IMR-90 (cell line): ENCODE measurements at regions of chrX and their contacts with region 1.

Region 1: DNA sequence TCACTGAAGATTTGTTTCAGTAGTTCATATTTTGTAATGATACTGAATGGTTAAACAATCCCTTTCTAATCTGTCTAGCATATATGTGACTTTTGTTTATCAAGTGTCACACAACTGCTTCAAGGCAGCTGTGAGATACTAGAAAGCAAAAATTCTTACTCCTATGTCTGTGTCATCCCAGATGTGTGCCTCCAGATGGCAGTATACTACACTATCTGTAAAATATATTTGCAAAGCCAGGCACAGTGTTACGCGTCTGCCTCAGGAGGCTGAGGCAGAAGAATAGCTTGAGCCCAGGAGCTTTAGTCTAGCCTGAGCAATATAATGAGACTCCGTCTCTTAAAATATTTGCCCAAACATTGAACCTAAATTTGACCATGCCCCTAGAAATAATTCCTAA is 4.0 kb downstream of the NUDT10 start:
- DNase-seq: peak; percentile 40
- ATAC-seq: peak; percentile 83
- H3K4me3 ChIP-seq: no peak overlapping the region
- H3K27ac ChIP-seq: no peak overlapping the region
- H3K4me1 ChIP-seq: no peaks in the 10 kb centered on the region
- H3K27me3 ChIP-seq: peaks cover 5% of the 10 kb centered on the region; the same call in 1 of the 2 replicates
- CTCF ChIP-seq: peak; percentile 57
- POLR2A ChIP-seq: no peak
- RAD21 ChIP-seq: peak; percentile 38

Region 2: DNA sequence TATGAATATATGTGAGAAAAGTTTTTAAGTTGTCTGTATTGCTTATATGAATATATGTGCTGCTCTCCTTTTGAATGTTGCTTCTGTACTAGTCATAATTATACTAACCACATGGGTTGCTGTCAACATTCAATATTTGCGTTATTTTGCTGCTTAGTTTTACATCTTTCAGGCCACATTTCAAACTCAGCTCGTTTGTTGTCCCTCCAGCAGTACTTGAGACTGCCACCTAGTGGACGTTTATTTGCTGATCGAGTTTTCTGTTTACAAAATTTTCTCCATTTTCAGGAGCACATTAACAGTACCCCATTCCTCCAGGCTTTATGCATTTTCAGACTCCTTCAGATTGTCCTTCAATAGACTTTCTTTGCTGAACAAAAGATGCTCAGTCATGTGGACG is 84.0 kb after region 1 on chrX:
- CTCF ChIA-PET with region 1: interaction called, 4 read pairs
- POLR2A ChIA-PET with region 1: no interaction called
- dilution Hi-C with region 1: no loop called
- in situ Hi-C with region 1: no loop called
- intact Hi-C with region 1: loop called (anchors 1 kb)
- DNase-seq: peak; percentile 45
- ATAC-seq: peak; percentile 46; the same call in 1 of the 2 replicates
- H3K4me3 ChIP-seq: no peak overlapping the region
- H3K27ac ChIP-seq: no peak overlapping the region
- H3K4me1 ChIP-seq: no peaks in the 10 kb centered on the region
- H3K27me3 ChIP-seq: peaks cover 3% of the 10 kb centered on the region; the same call in 1 of the 2 replicates
- CTCF ChIP-seq: peak; percentile 65
- POLR2A ChIP-seq: no peak
- RAD21 ChIP-seq: peak; percentile 41; the same call in 1 of the 2 replicates

Region 3: GRCh38 chrX:51461053-51462044 is 124.8 kb after region 1 on chrX:
- CTCF ChIA-PET with region 1: interaction called, 3 read pairs
- POLR2A ChIA-PET with region 1: no interaction called
- dilution Hi-C with region 1: no loop called
- in situ Hi-C with region 1: no loop called
- intact Hi-C with region 1: loop called (anchors 2 kb)
- DNase-seq: peak; percentile 42
- ATAC-seq: peak; percentile 60; the same call in 1 of the 2 replicates
- H3K4me3 ChIP-seq: no peak overlapping the region
- H3K27ac ChIP-seq: no peak overlapping the region
- H3K4me1 ChIP-seq: no peaks in the 10 kb centered on the region
- H3K27me3 ChIP-seq: peaks cover 13% of the 10 kb centered on the region
- CTCF ChIP-seq: peak; percentile 65
- POLR2A ChIP-seq: no peak
- RAD21 ChIP-seq: peak; percentile 45

Region 4: GRCh38 chrX:51507551-51507950 is 171.0 kb after region 1 on chrX:
- CTCF ChIA-PET with region 1: no interaction called
- POLR2A ChIA-PET with region 1: no interaction called
- dilution Hi-C with region 1: no loop called
- in situ Hi-C with region 1: no loop called
- intact Hi-C with region 1: no loop called
- DNase-seq: no peak
- ATAC-seq: no peak
- H3K4me3 ChIP-seq: no peak overlapping the region
- H3K27ac ChIP-seq: no peak overlapping the region
- H3K4me1 ChIP-seq: no peaks in the 10 kb centered on the region
- H3K27me3 ChIP-seq: peaks cover 3% of the 10 kb centered on the region
- CTCF ChIP-seq: no peak
- POLR2A ChIP-seq: no peak
- RAD21 ChIP-seq: no peak